Vagina (tissue), 2 donors: ENCODE measurements at regions of chr5 and their contacts with region 1.

Region 1: DNA sequence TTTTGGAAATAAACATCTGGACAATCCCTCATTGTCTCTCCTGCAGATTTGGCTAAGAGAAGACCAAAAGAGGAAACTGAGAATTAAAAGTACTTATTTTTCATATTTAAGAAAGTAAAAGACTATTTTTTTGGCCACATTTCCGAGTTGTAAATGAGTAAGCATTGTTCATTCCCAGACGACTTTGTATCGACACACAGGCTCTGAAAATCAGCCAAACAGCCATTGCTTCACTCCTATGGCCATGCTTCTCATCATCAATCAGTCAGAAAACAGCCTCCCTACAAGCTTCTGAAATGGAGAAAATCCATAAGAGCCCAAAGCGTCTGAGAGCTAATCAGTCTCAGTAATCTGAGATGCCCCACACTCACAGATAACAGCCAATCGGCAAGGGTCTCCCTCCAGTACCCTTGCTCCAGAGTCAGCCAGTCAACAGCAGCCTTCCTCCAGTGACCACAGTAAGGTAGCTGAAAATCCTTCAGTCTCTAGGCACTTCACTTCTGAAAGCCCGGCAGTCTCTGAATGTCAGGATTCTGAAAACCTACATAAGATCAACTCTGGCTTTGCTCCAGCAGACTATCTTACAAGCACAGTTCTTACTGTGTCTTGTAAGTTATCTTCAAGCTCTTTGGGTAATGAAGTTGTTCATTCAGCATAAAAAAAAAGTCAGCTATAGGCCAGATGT is 30.9 kb downstream of the CDO1 start:
- DNase-seq: no peak
- H3K4me3 ChIP-seq: no peak overlapping the region
- H3K27ac ChIP-seq: no peak overlapping the region
- H3K4me1 ChIP-seq: no peaks in the 10 kb centered on the region
- H3K27me3 ChIP-seq: no peaks in the 10 kb centered on the region
- CTCF ChIP-seq: no peak
- POLR2A ChIP-seq: no peak

Region 2: GRCh38 chr5:116343961-116344360 is 558.4 kb after region 1 on chr5:
- intact Hi-C with region 1: loop called (anchors 5 kb)
- DNase-seq: no peak
- H3K4me3 ChIP-seq: no peak overlapping the region
- H3K27ac ChIP-seq: no peak overlapping the region
- H3K4me1 ChIP-seq: no peaks in the 10 kb centered on the region
- H3K27me3 ChIP-seq: no peaks in the 10 kb centered on the region
- CTCF ChIP-seq: no peak
- POLR2A ChIP-seq: no peak

Region 3: GRCh38 chr5:117302949-117303348 is 1517.4 kb after region 1 on chr5:
- intact Hi-C with region 1: loop called (anchors 10 kb)
- DNase-seq: no peak
- H3K4me3 ChIP-seq: no peak overlapping the region
- H3K27ac ChIP-seq: no peak overlapping the region
- H3K4me1 ChIP-seq: no peaks in the 10 kb centered on the region
- H3K27me3 ChIP-seq: no peaks in the 10 kb centered on the region
- CTCF ChIP-seq: no peak
- POLR2A ChIP-seq: no peak